Activated B cell treated with CpG ODN at 0.5 μM for 24 hours (primary cell): ENCODE measurements at regions of chr21 and their contacts with region 1.

Region 1: GRCh38 chr21:25107708-25108107 is 499.6 kb downstream of the MRPL39 start:
- DNase-seq: no peak
- ATAC-seq: no peak
- H3K4me3 Mint-ChIP-seq: no peak overlapping the region
- H3K27ac Mint-ChIP-seq: no peak overlapping the region
- H3K4me1 Mint-ChIP-seq: peaks cover 3% of the 10 kb centered on the region
- H3K27me3 Mint-ChIP-seq: no peaks in the 10 kb centered on the region
- CTCF ChIP-seq: no peak

Region 2: GRCh38 chr21:25062061-25062460 is 45.6 kb before region 1 on chr21:
- CTCF ChIA-PET with region 1: no interaction called
- POLR2A ChIA-PET with region 1: no interaction called
- intact Hi-C with region 1: loop called (anchors 5 kb)
- DNase-seq: no peak
- ATAC-seq: peak; percentile 60
- H3K4me3 Mint-ChIP-seq: no peak overlapping the region
- H3K27ac Mint-ChIP-seq: peak overlapping the region; percentile 54
- H3K4me1 Mint-ChIP-seq: peaks cover 19% of the 10 kb centered on the region
- H3K27me3 Mint-ChIP-seq: no peaks in the 10 kb centered on the region
- CTCF ChIP-seq: no peak

Region 3: DNA sequence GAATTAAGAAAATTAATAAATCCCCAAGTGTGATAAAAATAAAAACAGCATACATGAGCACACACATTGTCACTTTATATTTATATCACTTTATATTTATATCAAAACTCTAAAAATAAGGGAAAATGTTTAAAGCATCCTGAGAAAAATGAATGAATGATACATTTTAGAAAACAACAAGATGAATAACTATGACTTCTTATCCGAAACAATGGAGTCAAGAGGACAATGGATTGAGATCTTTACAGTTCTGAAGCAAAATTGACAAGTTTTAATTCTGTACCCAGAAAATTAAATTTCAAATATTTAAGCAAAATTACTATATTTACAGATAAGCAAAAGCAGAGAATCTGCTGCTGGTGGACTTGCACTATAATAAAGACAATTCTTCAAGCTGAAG is 13.0 kb before region 1 on chr21:
- CTCF ChIA-PET with region 1: no interaction called
- POLR2A ChIA-PET with region 1: no interaction called
- intact Hi-C with region 1: loop called (anchors 2 kb)
- DNase-seq: no peak
- ATAC-seq: no peak
- H3K4me3 Mint-ChIP-seq: no peak overlapping the region
- H3K27ac Mint-ChIP-seq: no peak overlapping the region
- H3K4me1 Mint-ChIP-seq: peaks cover 5% of the 10 kb centered on the region
- H3K27me3 Mint-ChIP-seq: no peaks in the 10 kb centered on the region
- CTCF ChIP-seq: no peak

Region 4: DNA sequence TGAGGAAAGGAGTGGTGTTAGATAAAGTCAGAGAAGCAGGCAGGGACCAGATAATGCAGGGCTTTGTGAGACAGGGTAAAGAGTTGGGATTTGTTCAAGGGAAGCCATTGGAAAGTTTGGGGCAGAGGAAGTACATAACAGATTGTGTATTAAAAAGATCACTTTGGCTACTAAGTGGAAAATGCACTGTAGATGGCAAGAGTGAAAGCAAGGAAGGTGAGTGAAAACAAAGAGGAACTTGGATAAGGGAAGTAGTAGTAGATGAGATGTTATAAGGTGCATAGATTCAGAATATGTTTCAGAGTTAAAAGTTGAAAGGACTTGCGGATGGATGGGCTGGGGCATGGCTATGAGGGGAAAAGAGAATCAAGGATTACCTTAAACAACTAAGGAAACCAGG is 482.2 kb after region 1 on chr21:
- CTCF ChIA-PET with region 1: no interaction called
- POLR2A ChIA-PET with region 1: no interaction called
- intact Hi-C with region 1: no loop called
- DNase-seq: no peak
- ATAC-seq: no peak
- H3K4me3 Mint-ChIP-seq: no peak overlapping the region
- H3K27ac Mint-ChIP-seq: peak overlapping the region; percentile 47
- H3K4me1 Mint-ChIP-seq: peaks cover 15% of the 10 kb centered on the region
- H3K27me3 Mint-ChIP-seq: no peaks in the 10 kb centered on the region
- CTCF ChIP-seq: no peak